ENCODE measurements at regions of chr6 and their contacts with region 1.

Region 1: DNA sequence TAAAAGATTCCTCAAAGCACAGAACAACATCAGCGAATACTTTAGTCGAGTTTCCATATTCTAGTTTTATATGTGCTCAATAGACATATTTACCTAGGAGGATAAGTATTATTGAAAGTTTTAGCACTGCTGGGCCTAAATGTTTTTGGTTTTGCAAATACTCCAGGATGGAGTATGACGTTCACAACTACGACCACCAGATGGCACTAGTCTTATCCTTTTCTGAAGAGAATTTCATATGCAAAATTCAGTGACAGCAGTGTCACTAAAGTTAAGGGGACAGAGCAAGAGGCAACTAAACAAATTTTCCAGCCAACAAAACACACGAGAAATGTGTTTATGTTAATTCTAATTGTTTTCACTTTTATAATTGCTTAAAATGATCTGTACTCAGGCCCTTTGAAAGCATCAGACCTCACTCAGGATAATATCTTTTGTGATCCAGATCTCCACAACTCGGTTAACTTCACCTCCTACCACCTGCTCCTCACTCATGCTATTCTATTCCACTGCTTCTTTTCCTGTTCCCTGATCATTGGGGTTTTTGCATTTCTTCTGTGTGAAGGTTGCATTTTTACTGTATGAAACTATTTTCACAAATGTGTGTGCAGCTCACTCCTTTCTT is 220.8 kb downstream of the TRDN start:
- DNase-seq: peak in 4 of 5 donors; percentile 48 to 78 (median 66)
- H3K4me3 ChIP-seq: no peak overlapping the region
- H3K27ac ChIP-seq: no peak overlapping the region
- H3K4me1 ChIP-seq: no peaks in the 10 kb centered on the region
- H3K27me3 ChIP-seq: no peaks in the 10 kb centered on the region
- CTCF ChIP-seq: peak; percentile 68

Region 2: GRCh38 chr6:123352279-123352678 is 63.7 kb before region 1 on chr6:
- intact Hi-C with region 1: no loop called
- DNase-seq: no peak
- H3K4me3 ChIP-seq: no peak overlapping the region
- H3K27ac ChIP-seq: no peak overlapping the region
- H3K4me1 ChIP-seq: no peaks in the 10 kb centered on the region
- H3K27me3 ChIP-seq: no peaks in the 10 kb centered on the region
- CTCF ChIP-seq: no peak

Region 3: GRCh38 chr6:123715006-123715875 is 299.3 kb after region 1 on chr6:
- intact Hi-C with region 1: loop called (anchors 10 kb)
- DNase-seq: peak in 3 of 5 donors; percentile 22 to 60 (median 49)
- H3K4me3 ChIP-seq: no peak overlapping the region
- H3K27ac ChIP-seq: no peak overlapping the region
- H3K4me1 ChIP-seq: no peaks in the 10 kb centered on the region
- H3K27me3 ChIP-seq: no peaks in the 10 kb centered on the region
- CTCF ChIP-seq: peak; percentile 66

Measured in kidney (tissue), 22 donors.